Calu3 (cell line): ENCODE measurements at regions of chr3 and their contacts with region 1.

Region 1: GRCh38 chr3:160929595-160929994 is 173.6 kb downstream of the PPM1L start:
- DNase-seq: peak; percentile 63
- H3K4me3 Mint-ChIP-seq: no peak overlapping the region
- H3K27ac Mint-ChIP-seq: no peak overlapping the region
- H3K4me1 Mint-ChIP-seq: no peaks in the 10 kb centered on the region
- H3K27me3 Mint-ChIP-seq: no peaks in the 10 kb centered on the region
- CTCF ChIP-seq: no peak

Region 2: DNA sequence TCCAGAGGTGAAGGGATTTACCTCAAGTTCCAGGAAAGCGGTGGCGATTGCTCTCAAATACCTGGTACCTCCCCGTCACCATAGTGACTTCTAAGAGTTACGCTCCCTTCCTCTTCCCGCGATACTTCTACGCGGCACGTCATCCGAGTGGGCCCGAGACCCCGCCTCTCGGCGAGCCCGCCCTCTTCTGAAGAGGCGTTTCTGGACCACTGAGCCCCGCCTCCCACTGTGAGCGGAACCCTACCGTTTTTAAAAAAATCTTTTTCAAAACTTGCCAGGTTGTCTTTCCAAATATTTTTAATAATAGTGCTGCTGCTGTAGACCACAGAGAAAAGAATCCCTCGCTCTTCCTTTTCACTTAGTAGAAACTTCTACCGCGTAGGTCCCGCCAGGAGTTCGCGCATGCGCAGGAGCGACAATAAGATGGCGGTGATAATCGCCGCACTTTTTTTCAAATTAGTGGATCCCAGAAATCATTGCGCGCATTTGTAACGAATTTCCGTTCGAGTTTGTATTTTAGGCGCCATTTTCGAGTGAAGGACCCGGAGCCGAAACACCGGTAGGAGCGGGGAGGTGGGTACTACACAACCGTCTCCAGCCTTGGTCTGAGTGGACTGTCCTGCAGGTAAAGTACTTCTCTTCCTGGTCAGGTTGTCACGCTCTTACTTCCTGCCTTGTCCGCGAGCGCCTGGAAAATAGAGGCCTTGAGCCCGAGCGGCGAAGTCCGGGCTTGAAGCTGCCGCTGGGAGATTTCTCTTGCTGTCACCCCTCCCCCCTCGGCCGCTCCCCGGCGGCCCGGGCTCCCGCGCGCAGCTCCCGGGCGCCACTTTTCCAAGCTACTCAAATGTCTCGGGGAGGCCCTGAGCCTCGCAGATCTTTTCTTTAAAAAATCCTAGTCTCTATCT is 530.2 kb before region 1 on chr3 and contains the starts of genes IFT80 and SMC4:
- CTCF ChIA-PET with region 1: no interaction called
- intact Hi-C with region 1: no loop called
- DNase-seq: peak; percentile 99
- H3K4me3 Mint-ChIP-seq: peak within 1 kb of the TSS; percentile 98
- H3K27ac Mint-ChIP-seq: peak within 1 kb of the TSS; percentile 98
- H3K4me1 Mint-ChIP-seq: peaks cover 41% of the 10 kb centered on the region
- H3K27me3 Mint-ChIP-seq: no peaks in the 10 kb centered on the region
- CTCF ChIP-seq: no peak
- total RNA-seq, gene IFT80: 58.0 and 61.8 TPM in 2 replicates
- total RNA-seq, gene SMC4: 231 and 256 TPM in 2 replicates

Region 3: DNA sequence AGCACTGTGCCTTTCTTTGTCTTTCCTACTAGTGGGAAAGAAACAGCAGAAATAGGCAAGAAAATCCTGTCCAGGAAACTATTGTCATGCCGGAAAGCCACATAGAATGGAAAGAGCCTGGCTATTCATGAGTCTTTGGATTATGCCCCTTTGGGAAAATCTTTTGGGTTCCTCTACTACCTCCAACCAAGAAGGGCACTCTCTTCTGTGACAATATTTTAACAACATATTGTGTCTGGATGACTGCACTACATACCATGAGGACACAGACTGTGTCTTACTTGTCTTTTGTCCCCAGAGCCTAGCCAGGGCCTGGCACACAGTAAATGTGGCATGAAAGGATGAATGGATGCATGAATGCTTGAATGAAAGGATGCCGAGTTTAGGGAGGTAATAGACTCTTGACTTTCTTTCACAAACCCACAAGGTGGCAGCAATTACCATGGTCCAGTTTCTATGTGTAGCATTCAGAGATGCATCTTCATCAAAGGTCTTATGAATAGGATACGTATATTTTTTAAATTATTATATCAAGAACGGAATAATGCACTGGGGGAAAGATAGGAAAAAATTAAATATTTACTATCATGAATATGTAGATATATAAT is 222.3 kb before region 1 on chr3:
- CTCF ChIA-PET with region 1: no interaction called
- intact Hi-C with region 1: loop called (anchors 5 kb)
- DNase-seq: peak; percentile 58
- H3K4me3 Mint-ChIP-seq: no peak overlapping the region
- H3K27ac Mint-ChIP-seq: no peak overlapping the region
- H3K4me1 Mint-ChIP-seq: no peaks in the 10 kb centered on the region
- H3K27me3 Mint-ChIP-seq: no peaks in the 10 kb centered on the region
- CTCF ChIP-seq: peak; percentile 62